ENCODE measurements at regions of chr15 and their contacts with region 1.

Region 1: DNA sequence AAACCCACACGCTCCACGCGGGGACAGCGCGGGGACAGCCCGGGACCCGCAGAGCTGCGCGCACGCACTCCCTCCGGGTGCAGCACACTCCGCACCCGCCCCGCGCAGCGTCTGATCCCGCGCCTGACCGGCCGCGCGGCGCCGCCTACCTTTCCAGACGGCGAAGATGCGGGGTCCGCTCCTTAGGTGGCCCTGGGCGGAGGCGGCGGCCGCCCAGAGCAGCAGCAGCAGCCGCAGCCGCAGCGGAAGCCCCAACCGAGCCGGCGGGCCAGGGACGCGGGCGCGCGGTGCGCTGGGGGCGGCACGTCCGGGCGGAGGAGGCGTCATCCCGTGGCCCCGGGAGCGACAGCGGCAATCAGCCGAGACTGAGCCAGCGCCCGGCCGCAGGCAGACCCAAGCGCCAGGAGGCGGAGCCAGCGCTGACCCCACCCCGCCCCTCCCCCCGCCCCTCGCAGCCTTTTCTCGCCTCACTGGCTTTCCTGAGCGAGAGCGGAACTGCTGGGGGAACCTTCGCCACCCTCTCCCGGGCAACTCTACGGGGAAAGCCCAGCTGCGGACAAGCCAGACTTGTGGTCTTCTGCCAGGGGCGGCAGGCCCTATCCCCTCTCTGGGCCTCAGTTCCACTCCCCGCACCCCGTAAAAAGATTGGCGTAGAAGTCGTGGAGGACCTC is at the start of gene SEMA7A:
- DNase-seq: peak; percentile 90
- ATAC-seq: peak; percentile 89
- H3K4me3 Mint-ChIP-seq: peak within 1 kb of the TSS; percentile 87
- H3K27ac Mint-ChIP-seq: peak within 1 kb of the TSS; percentile 86
- H3K4me1 Mint-ChIP-seq: peaks cover 61% of the 10 kb centered on the region
- H3K27me3 Mint-ChIP-seq: no peaks in the 10 kb centered on the region
- total RNA-seq, gene SEMA7A: 26.4 to 32.9 TPM

Region 2: DNA sequence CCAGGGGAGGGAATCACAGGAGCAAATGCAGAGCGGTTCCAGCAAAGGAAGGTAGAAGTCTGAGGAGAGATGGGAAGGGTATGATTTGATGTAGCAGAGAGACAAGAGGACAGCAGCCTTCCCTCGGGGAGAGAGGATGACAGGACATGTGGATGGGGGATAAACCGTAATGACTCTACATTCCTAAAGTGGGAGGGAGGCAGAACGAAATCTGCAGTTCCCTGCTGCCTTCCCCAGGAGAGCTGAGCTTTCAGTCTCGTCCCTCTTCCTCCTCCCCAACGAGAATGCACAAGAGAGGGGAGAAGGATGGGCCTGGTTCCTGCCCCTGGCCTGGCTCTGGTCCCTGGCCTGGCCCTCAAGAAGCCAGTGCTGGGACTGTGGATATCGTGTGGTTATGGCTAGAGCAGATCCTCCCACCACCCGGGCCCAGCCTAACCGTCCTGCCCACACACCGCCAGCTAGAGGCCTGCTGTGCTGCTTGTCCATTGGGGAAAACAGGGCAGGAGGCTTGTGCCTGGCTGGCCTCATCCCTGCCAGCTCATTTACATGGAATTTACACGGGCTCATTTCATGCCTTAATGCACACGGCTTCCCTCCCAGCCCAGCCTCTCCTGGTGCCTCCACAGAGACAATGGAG is 26.6 kb before region 1 on chr15:
- CTCF ChIA-PET with region 1: interaction called, 108 read pairs
- DNase-seq: no peak
- ATAC-seq: no peak
- H3K4me3 Mint-ChIP-seq: no peak overlapping the region
- H3K27ac Mint-ChIP-seq: no peak overlapping the region
- H3K4me1 Mint-ChIP-seq: peaks cover 29% of the 10 kb centered on the region
- H3K27me3 Mint-ChIP-seq: no peaks in the 10 kb centered on the region

Region 3: DNA sequence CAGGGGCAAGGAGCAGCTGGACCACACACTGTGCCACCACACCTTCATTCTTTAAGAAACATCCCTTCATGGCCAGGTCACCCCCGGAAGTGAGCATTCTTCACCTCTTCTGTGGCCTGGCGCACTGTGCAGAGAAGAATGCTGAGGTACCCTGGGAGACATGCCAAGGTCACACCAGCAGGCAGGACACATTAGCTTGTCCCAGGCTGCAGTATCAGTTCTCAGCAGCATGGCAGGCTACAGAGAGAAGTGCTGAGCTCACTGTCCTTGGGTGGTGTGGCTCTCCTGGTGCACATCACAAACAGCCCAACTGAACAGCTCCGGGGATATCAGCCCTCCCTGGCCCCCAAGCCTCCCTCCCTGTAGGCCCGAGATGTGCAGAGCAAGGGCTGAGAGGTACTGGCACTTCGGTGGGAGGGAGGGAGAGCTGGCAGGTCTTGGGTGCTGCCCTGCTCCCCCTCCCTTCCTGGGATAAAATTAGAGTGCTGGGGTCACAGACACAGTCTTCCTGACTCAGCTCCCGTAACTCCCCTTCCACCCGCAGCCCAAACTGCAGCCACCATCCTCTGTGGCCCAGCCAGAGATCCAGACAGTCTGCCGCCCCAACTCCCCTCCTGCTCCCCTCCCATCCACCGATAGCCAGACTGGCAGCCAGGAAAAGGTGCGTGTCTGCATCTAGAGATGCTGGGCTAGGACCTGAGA is 13.4 kb before region 1 on chr15:
- CTCF ChIA-PET with region 1: interaction called, 13 read pairs
- DNase-seq: peak; percentile 54
- ATAC-seq: peak; percentile 74
- H3K4me3 Mint-ChIP-seq: no peak overlapping the region
- H3K27ac Mint-ChIP-seq: peak overlapping the region; percentile 81
- H3K4me1 Mint-ChIP-seq: peaks cover 60% of the 10 kb centered on the region
- H3K27me3 Mint-ChIP-seq: no peaks in the 10 kb centered on the region